Mammary epithelial cell (primary cell): ENCODE measurements at regions of chr16 and their contacts with region 1.

Region 1: DNA sequence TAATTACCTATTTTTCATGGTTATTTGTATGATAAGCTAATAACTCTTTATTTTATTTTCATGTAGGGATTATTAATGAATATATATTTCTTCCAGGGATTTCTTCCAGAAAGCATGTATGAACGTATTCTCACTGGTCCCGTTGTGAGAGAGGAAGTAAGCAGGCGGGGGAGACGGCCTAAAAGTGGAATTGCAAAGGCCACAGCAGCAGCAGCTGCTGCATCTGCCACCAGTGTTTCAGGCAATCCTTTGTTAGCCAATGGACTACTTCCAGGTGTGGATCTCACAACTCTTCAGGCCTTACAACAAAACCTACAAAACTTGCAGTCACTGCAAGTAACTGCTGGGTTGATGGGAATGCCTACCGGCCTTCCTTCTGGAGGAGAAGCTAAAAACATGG is 110.3 kb upstream of the RBL2 start:
- DNase-seq: no peak
- H3K4me3 ChIP-seq: no peak overlapping the region
- H3K27ac ChIP-seq: no peak overlapping the region
- H3K4me1 ChIP-seq: no peaks in the 10 kb centered on the region
- H3K27me3 ChIP-seq: no peaks in the 10 kb centered on the region
- CTCF ChIP-seq: no peak

Region 2: GRCh38 chr16:53372992-53373871 is 49.3 kb after region 1 on chr16:
- CTCF ChIA-PET with region 1: no interaction called
- dilution Hi-C with region 1: no loop called
- in situ Hi-C with region 1: no loop called
- intact Hi-C with region 1: no loop called
- DNase-seq: peak; percentile 74
- H3K4me3 ChIP-seq: peak overlapping the region; percentile 50 to 65 (median 65)
- H3K27ac ChIP-seq: no peak overlapping the region
- H3K4me1 ChIP-seq: peaks cover 12% of the 10 kb centered on the region
- H3K27me3 ChIP-seq: peaks cover 7% of the 10 kb centered on the region
- CTCF ChIP-seq: no peak

Region 3: DNA sequence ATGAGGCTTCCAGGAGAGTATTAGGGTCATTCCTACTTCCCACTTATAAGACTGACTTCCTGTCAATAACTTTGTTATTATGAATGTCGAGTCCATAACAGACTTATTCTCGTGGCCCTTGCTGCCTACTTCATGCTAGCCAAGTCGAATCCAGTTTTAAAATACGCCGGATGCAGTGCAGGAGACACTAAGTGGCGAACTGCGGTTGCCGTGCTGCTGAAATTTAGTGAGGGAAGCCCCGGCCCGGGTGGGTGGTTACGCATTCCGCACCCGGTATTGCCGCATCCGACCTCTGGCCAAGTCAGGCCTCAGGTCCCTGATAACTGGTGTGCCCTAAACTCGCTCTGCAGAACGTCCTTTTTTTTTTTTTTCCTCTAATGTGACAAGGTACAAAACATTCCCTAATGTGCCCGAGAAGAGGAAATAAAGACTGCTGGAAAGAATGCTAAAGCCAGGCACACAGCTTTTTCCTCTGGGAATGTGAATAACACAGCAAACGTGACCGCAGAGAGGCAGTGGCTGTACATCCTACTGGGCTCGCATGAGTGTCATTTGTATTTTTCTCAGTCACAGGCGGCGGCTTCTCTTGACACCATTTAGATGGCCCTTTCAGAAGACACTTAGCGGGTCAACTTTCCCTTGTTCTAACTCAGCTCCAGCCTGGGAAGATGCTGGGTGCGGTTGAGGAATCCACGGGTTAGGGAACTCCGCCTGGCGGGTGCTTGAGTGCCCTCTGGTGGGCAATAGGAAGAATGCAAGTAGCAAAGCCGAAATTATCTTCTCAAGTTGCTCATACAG is 186.2 kb after region 1 on chr16:
- CTCF ChIA-PET with region 1: no interaction called
- dilution Hi-C with region 1: no loop called
- in situ Hi-C with region 1: no loop called
- intact Hi-C with region 1: loop called (anchors 2 kb)
- DNase-seq: peak; percentile 39
- H3K4me3 ChIP-seq: no peak overlapping the region
- H3K27ac ChIP-seq: no peak overlapping the region
- H3K4me1 ChIP-seq: no peaks in the 10 kb centered on the region
- H3K27me3 ChIP-seq: no peaks in the 10 kb centered on the region
- CTCF ChIP-seq: peak; percentile 93 to 97